Upper lobe of right lung (tissue), 1 donor: ENCODE measurements at regions of chr1 and their contacts with region 1.

Region 1: DNA sequence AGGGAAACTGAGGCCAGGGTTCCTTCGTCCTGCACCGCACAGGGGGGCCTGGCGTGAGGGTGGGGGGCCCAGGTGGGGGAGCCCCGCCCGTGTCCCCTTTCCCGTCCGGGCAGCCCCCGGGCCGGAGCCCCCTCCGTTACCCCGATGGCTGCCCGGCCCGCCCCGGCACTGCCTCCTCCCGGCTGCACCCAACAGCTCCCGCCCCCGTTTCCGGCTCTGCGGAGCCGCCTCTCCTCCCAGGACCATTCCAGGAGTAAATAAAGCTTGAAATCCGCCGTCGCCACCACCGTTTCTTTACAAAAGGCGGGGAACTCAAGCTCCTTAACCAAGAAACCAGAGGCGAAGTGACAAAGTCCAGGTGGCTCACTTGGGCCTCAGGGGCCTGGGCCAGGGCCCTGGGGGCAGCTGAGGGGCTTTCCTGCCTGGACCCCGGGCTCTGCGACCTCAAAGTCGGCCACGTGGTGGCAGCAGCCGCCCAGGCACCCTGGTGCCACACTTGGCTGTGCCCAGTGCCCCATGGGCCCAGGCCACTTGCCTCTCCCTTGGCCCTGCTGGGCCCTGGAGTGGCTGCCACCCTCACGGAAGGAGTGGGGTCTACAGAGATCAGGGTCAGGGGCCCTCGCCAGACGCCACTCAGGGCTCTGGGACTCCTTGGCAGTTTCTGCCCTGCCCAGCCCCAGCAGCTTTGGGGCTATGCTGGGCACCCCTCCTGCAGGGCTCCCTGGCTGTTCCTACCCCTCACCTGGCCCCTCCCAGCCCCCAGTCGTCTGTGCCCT is 514 bp upstream of the FAAP20 start:
- DNase-seq: peak; percentile 96
- ATAC-seq: peak; percentile 79
- H3K4me3 ChIP-seq: peak overlapping the region; percentile 80
- H3K27ac ChIP-seq: peak overlapping the region; percentile 87
- H3K4me1 ChIP-seq: peaks cover 46% of the 10 kb centered on the region
- H3K27me3 ChIP-seq: no peaks in the 10 kb centered on the region
- CTCF ChIP-seq: peak; percentile 93

Region 2: DNA sequence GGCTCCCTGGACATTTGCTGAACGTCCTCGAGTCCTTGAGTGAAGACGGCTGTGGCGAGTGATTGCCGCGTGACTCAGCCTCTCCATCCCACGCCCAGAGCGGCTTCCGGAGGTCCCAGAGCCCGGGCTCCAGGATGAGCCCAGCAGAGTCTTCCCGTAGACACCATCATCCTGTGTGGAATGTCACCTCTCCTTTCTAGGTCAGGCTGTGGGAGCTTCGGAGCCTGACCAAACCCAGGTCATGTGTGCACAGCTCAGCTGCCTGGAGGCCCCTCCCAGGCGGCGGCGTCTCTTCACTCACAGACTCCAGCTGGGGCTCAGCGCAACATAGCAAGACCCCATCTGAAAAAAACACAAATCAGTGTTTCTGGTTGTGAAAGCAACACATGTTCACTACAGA is 106.6 kb before region 1 on chr1:
- intact Hi-C with region 1: no loop called
- DNase-seq: no peak
- ATAC-seq: no peak
- H3K4me3 ChIP-seq: no peak overlapping the region
- H3K27ac ChIP-seq: no peak overlapping the region
- H3K4me1 ChIP-seq: no peaks in the 10 kb centered on the region
- H3K27me3 ChIP-seq: no peaks in the 10 kb centered on the region
- CTCF ChIP-seq: no peak

Region 3: GRCh38 chr1:2290595-2291510 is 95.8 kb after region 1 on chr1:
- intact Hi-C with region 1: no loop called
- DNase-seq: peak; percentile 90
- ATAC-seq: peak; percentile 83
- H3K4me3 ChIP-seq: peak overlapping the region; percentile 37
- H3K27ac ChIP-seq: peak overlapping the region; percentile 79
- H3K4me1 ChIP-seq: peaks cover 81% of the 10 kb centered on the region
- H3K27me3 ChIP-seq: no peaks in the 10 kb centered on the region
- CTCF ChIP-seq: no peak

Region 4: DNA sequence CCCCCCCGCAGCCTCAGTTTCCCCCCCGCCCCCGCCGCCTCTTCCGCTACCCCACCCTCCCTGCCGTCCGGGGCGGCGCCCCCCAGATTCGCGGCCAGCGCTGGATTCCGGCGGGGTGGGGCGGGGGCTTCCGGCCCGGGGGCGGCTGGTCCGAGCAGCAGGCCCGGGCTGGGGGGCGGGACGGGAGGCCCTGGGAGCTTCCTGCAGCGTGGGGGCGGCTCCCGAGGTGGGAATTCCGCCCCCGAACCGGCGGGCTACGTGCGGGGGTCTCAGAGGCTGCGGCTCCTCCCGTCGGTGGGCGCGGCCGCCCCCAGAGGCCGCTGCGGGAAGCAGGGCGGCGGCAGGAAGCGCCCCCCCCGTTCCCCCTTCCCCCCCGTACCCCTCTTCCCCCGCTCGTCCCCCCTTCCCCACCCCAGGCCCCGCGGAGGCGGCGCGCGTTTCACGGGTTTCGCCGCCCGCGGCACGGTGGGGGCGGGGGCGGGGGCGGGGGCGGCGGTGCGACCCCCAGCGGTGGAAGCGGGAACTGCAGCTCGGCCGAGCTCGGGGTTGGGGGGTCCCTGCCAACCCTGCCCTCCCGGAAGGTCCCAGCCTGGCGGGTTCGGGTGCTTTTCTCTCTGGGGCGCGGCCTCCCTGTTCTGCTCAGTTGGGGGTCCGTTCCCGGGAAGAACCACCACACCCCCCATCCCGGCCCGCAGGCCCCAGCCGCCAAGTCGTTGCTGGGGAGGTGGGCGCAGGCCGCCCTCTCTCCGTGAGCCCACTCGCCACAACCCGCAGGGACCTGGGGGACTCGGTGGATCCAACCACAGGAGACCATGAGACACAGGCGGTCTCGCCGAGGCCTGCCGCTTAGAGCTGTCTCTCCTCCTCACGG is 120.0 kb after region 1 on chr1:
- intact Hi-C with region 1: loop called (anchors 10 kb)
- DNase-seq: peak; percentile 83
- ATAC-seq: peak; percentile 58
- H3K4me3 ChIP-seq: peak overlapping the region; percentile 63
- H3K27ac ChIP-seq: peak overlapping the region; percentile 90
- H3K4me1 ChIP-seq: peaks cover 49% of the 10 kb centered on the region
- H3K27me3 ChIP-seq: no peaks in the 10 kb centered on the region
- CTCF ChIP-seq: peak; percentile 96

Region 5: GRCh38 chr1:2381741-2382620 is 186.9 kb after region 1 on chr1:
- intact Hi-C with region 1: loop called (anchors 5 kb)
- DNase-seq: peak; percentile 92
- ATAC-seq: peak; percentile 94
- H3K4me3 ChIP-seq: no peak overlapping the region
- H3K27ac ChIP-seq: no peak overlapping the region
- H3K4me1 ChIP-seq: peaks cover 5% of the 10 kb centered on the region
- H3K27me3 ChIP-seq: no peaks in the 10 kb centered on the region
- CTCF ChIP-seq: peak; percentile 94